HepG2 (cell line): ENCODE measurements at regions of chr18 and their contacts with region 1.

Region 1: GRCh38 chr18:53153281-53153680 is 813.3 kb downstream of the DCC start:
- DNase-seq: peak; percentile 2
- ATAC-seq: peak; percentile 37; the same call in 1 of the 3 replicates
- H3K4me3 ChIP-seq: no peak overlapping the region
- H3K27ac ChIP-seq: no peak overlapping the region
- H3K4me1 ChIP-seq: no peaks in the 10 kb centered on the region
- H3K27me3 ChIP-seq: no peaks in the 10 kb centered on the region
- CTCF ChIP-seq: peak; percentile 21; the same call in 1 of the 2 replicates
- EP300 ChIP-seq: no peak
- POLR2A ChIP-seq: no peak
- RAD21 ChIP-seq: no peak

Region 2: DNA sequence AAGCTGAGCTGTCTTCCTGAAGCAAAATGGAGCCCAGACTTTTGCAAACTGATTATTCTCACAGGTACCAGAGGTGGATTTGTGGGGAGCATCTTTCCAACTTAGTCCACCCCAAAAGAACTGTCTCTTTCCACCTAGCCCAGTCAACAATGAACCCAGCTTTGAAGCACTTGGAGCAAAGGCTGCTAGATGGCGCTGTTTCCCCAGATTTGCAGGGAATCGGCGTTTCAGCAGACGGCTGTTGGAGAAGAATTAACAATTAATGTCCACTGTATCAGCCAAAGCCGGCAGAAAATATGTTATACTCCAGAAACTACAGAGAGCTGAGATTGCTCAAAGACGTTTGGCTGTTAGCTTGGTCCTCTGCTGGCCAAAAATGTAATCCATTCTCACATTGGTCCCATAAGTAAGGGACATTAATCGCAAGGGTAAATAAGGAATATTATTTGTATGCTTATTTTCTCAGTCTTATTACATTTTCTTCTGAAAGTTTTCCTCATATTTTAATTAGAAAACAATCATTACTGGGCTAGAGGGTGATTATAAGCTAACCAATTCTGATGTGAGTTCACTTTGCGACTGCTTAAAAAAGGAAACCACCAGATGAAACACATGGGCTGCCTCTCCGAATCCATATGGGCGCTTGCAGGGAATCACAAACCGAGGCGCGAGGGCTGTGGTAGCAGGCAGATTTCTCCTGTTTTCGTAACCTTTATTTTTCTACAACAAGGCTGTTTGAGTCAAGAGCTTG is 1532.0 kb before region 1 on chr18:
- CTCF ChIA-PET with region 1: no interaction called
- POLR2A ChIA-PET with region 1: no interaction called
- in situ Hi-C with region 1: no loop called
- intact Hi-C with region 1: loop called (anchors 5 kb)
- DNase-seq: peak; percentile 21
- ATAC-seq: peak; percentile 71
- H3K4me3 ChIP-seq: no peak overlapping the region
- H3K27ac ChIP-seq: no peak overlapping the region
- H3K4me1 ChIP-seq: no peaks in the 10 kb centered on the region
- H3K27me3 ChIP-seq: peaks cover 0 to 5% of the 10 kb centered on the region in 2 experiments; a peak in 1 of 5 replicates
- CTCF ChIP-seq: peak; percentile 78
- EP300 ChIP-seq: no peak
- POLR2A ChIP-seq: no peak
- RAD21 ChIP-seq: peak; percentile 43; the same call in 1 of the 2 replicates